ENCODE measurements at regions of chr3 and their contacts with region 1.

Region 1: GRCh38 chr3:12891985-12892839 is 50.8 kb upstream of the RPL32 start:
- DNase-seq: peak in 4 of 5 donors; percentile 13 to 53 (median 38)
- ATAC-seq: peak; percentile 11 to 40 (median 31)
- H3K4me3 ChIP-seq: peak overlapping the region in 8 of 12 donors; percentile 2 to 47 (median 25)
- H3K27ac ChIP-seq: no peak overlapping the region
- H3K4me1 ChIP-seq: peaks cover 0 to 38% (median 22%) of the 10 kb centered on the region in 12 donors
- H3K27me3 ChIP-seq: peaks cover 0 to 5% (median 0%) of the 10 kb centered on the region in 9 donors
- CTCF ChIP-seq: peak; percentile 72 to 94 (median 87)
- POLR2A ChIP-seq: no peak

Region 2: DNA sequence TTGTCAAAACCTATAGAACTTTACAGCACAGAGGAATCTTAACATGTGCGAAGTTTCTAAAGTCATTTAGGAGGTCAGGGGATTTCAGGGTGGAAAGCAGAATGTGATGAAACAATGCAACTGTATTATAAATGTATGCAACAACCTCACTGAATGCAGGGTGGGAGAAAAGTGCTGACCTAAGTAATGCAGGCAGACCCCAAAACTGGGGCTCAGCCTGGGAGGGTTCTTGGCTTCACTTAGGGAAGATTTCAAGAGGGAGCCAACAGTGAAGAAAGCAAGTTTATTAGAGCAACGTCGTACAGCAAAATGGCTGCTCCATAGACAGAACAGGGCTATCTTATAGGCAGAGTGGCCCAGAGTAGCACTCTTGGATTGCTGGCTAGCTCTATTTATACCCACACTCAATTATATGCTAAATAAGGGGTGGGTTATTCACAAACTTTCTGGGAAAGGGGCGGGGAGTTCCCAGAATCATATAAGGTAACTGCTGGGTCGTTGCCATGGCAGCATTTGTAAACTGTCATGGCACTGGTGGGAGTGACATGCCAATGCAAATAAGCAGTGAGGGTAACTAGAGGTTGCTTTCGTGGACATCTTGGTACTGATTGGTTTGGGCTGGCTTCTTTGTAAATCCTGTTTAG is 109.9 kb before region 1 on chr3:
- intact Hi-C with region 1: loop called in 2 of 10 experiments (anchors 5 to 10 kb)
- DNase-seq: no peak
- ATAC-seq: peak; percentile 32 to 84 (median 80)
- H3K4me3 ChIP-seq: no peak overlapping the region
- H3K27ac ChIP-seq: no peak overlapping the region
- H3K4me1 ChIP-seq: peaks cover 0 to 5% (median 0%) of the 10 kb centered on the region in 12 donors
- H3K27me3 ChIP-seq: peaks cover 0 to 4% (median 0%) of the 10 kb centered on the region in 9 donors
- CTCF ChIP-seq: no peak
- POLR2A ChIP-seq: no peak

Region 3: GRCh38 chr3:12868039-12869034 is 23.9 kb before region 1 on chr3:
- intact Hi-C with region 1: loop called in 5 of 10 experiments (anchors 1 to 2 kb)
- DNase-seq: peak; percentile 85 to 90 (median 86)
- ATAC-seq: peak; percentile 83 to 96 (median 94)
- H3K4me3 ChIP-seq: peak overlapping the region in 9 of 12 donors; percentile 1 to 47 (median 26)
- H3K27ac ChIP-seq: peak overlapping the region in 1 of 12 donors; percentile 25
- H3K4me1 ChIP-seq: peaks cover 0 to 13% (median 8%) of the 10 kb centered on the region in 12 donors
- H3K27me3 ChIP-seq: peaks cover 0 to 13% (median 0%) of the 10 kb centered on the region in 9 donors
- CTCF ChIP-seq: peak; percentile 80 to 98 (median 92)
- POLR2A ChIP-seq: no peak

Region 4: DNA sequence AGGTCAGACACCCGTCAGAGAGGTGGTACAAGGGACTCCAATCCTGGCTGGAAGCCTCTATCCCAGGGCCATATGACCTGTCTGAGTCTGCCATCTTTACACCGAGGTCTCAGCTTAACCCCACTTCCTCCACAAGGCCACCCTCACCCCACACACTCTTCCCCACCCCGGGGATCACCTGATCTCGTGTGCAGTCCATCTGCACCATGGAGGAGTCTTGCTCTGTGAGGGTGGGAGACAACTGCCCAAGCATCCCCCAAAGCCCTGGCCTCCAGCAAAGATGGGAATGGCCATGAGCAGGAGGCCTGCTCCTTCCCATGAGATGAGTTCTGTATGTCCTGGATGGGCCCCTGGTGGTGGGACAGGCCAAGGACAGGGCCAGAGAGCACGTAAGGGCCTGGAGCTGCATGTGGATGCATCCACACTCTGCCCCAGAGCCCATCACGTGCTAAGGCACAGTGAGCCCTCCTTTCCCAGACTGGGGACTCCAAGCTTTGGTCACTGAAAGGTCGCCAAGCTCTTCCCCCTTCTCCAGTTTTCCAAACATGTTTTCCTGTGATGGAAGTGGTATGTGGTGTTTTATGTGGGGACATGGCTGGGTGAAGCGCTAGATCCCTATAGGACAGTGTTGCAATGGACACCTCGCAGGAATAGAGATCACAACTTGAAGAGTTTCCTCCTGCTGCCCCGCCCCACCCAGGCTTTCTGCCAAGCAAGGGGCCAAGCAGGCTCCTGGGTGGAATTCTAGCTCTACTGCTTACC is 55.3 kb after region 1 on chr3:
- intact Hi-C with region 1: loop called in 1 of 10 experiments (anchors 2 kb)
- DNase-seq: peak in 3 of 5 donors; percentile 59 to 75 (median 74)
- ATAC-seq: peak in 1 of 4 donors; percentile 24
- H3K4me3 ChIP-seq: no peak overlapping the region
- H3K27ac ChIP-seq: peak overlapping the region in 4 of 12 donors; percentile 6 to 52 (median 23)
- H3K4me1 ChIP-seq: peaks cover 9 to 97% (median 80%) of the 10 kb centered on the region in 12 donors
- H3K27me3 ChIP-seq: no peaks in the 10 kb centered on the region
- CTCF ChIP-seq: peak in 3 of 12 donors; percentile 5 to 23 (median 9)
- POLR2A ChIP-seq: no peak

Region 5: GRCh38 chr3:12984023-12984823 is 92.0 kb after region 1 on chr3:
- intact Hi-C with region 1: loop called in 5 of 10 experiments (anchors 1 to 10 kb)
- DNase-seq: peak in 4 of 5 donors; percentile 71 to 80 (median 74)
- ATAC-seq: peak; percentile 78 to 90 (median 82)
- H3K4me3 ChIP-seq: no peak overlapping the region
- H3K27ac ChIP-seq: peak overlapping the region in 4 of 12 donors; percentile 2 to 41 (median 23)
- H3K4me1 ChIP-seq: peaks cover 0 to 64% (median 28%) of the 10 kb centered on the region in 12 donors
- H3K27me3 ChIP-seq: no peaks in the 10 kb centered on the region
- CTCF ChIP-seq: peak; percentile 68 to 92 (median 80)
- POLR2A ChIP-seq: no peak

Region 6: GRCh38 chr3:12994607-12995388 is 102.6 kb after region 1 on chr3:
- intact Hi-C with region 1: loop called in 3 of 10 experiments (anchors 5 to 10 kb)
- DNase-seq: peak; percentile 90 to 94 (median 92)
- ATAC-seq: peak; percentile 60 to 78 (median 76)
- H3K4me3 ChIP-seq: peak overlapping the region; percentile 48 to 94 (median 84)
- H3K27ac ChIP-seq: peak overlapping the region; percentile 68 to 96 (median 94)
- H3K4me1 ChIP-seq: peaks cover 0 to 71% (median 31%) of the 10 kb centered on the region in 12 donors
- H3K27me3 ChIP-seq: no peaks in the 10 kb centered on the region
- CTCF ChIP-seq: peak; percentile 87 to 98 (median 94)
- POLR2A ChIP-seq: peak in 1 of 2 donors; percentile 61

Region 7: DNA sequence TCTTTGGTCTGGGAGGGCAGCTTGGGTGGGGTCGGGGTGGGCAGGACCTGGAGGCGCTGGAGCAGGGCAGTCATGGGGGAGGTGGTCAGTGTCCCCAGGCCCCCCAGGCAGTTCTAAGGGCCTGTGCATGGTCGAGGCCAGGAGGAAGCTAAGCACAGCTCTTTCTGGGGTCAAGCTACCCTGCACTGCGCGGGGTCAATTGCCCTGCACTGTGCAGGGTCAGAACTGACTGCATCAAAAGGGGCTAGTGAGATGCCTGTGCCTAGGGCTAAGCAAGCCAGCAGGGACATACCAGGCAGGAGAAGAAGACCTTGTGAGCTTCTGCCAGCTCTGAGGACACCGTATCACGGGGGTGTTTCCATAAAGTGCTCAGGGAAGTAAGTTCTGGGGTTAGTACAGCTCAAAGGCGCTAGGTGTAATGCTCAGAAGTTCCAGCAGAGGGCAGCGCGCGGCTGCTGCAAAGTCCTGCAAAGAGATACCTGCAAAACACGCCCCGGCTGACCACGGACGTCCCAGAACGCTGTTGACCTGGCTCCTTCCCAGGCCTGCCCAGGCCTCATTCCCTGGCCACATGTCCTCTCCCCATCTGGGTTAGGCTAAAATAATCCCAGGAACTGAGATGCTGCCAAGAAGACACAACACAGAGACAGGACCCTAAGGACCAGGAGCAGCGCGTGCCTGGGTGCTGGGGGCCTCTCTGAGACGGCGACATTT is 199.8 kb after region 1 on chr3:
- intact Hi-C with region 1: loop called in 1 of 10 experiments (anchors 10 kb)
- DNase-seq: peak; percentile 84 to 90 (median 87)
- ATAC-seq: peak; percentile 79 to 83 (median 81)
- H3K4me3 ChIP-seq: peak overlapping the region in 6 of 12 donors; percentile 22 to 34 (median 24)
- H3K27ac ChIP-seq: peak overlapping the region in 8 of 12 donors; percentile 28 to 78 (median 60)
- H3K4me1 ChIP-seq: peaks cover 0 to 24% (median 10%) of the 10 kb centered on the region in 12 donors
- H3K27me3 ChIP-seq: no peaks in the 10 kb centered on the region
- CTCF ChIP-seq: peak; percentile 93 to 99 (median 97)
- POLR2A ChIP-seq: no peak

Region 8: GRCh38 chr3:14096745-14097144 is 1204.5 kb after region 1 on chr3:
- intact Hi-C with region 1: no loop called
- DNase-seq: no peak
- ATAC-seq: no peak
- H3K4me3 ChIP-seq: no peak overlapping the region
- H3K27ac ChIP-seq: no peak overlapping the region
- H3K4me1 ChIP-seq: no peaks in the 10 kb centered on the region
- H3K27me3 ChIP-seq: peaks cover 0 to 9% (median 0%) of the 10 kb centered on the region in 9 donors
- CTCF ChIP-seq: no peak
- POLR2A ChIP-seq: no peak

Measured in heart left ventricle (tissue), 16 donors.